ENCODE measurements at regions of chr14 and their contacts with region 1.

Region 1: DNA sequence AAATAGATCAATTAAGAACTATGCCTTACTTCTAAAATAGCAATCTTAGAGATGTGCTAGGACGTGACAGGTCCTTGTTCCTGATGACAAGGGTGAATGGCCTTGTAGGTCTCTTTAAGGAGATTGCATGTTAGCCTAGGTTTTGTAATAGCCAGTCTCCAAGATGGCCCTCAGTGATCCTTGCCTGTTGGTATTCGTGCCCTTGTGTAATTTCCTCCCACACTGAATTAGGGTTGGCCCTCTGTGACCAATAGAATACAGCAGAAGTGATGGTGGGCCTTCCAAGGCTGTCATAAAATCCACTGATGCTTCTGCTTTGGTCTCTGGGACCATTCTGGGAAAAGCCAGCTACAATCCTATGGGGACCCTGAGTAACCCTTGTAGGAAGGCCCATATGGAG is 38.2 kb upstream of the SNX6 start:
- DNase-seq: no peak
- H3K4me3 ChIP-seq: no peak overlapping the region
- CTCF ChIP-seq: no peak

Region 2: GRCh38 chr14:34682787-34683321 is 14.7 kb after region 1 on chr14:
- CTCF ChIA-PET with region 1: interaction called, 26 read pairs
- POLR2A ChIA-PET with region 1: no interaction called
- DNase-seq: no peak
- H3K4me3 ChIP-seq: no peak overlapping the region
- CTCF ChIP-seq: no peak

Region 3: GRCh38 chr14:34714320-34715126 is 46.4 kb after region 1 on chr14 and contains the start of gene CFL2:
- CTCF ChIA-PET with region 1: interaction called, 22 read pairs
- POLR2A ChIA-PET with region 1: no interaction called
- DNase-seq: no peak
- H3K4me3 ChIP-seq: peak within 1 kb of the TSS; percentile 73
- CTCF ChIP-seq: no peak

Region 4: DNA sequence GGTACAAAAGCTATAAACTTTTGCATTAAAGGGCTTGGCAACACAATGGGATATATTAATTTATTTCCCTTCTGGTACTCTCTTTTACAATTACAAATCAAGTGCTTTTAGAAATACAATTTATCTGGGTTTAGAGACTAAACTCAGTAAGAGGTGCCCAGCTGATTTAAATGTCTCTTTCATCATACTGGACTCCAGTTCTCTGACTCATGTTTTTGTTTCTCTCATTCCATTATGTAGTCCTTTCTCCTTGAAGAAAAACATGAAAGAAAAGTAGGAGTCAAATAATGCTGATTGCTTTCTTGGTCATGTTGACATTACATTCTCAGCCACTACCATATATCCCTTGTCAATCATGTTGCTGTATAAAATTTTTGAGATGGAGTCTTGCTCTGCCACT is 82.6 kb after region 1 on chr14:
- CTCF ChIA-PET with region 1: interaction called, 13 read pairs
- POLR2A ChIA-PET with region 1: no interaction called
- DNase-seq: peak; percentile 44
- H3K4me3 ChIP-seq: no peak overlapping the region
- CTCF ChIP-seq: no peak

Measured in AG04449 (cell line).